ENCODE measurements at regions of chr9 and their contacts with region 1.

Region 1: GRCh38 chr9:137150617-137151457 is 11.9 kb downstream of the GRIN1 start:
- DNase-seq: peak; percentile 95
- H3K4me3 ChIP-seq: peak overlapping the region; percentile 40
- H3K27ac ChIP-seq: peak overlapping the region; percentile 42
- H3K4me1 ChIP-seq: peaks cover 17% of the 10 kb centered on the region
- CTCF ChIP-seq: no peak

Region 2: DNA sequence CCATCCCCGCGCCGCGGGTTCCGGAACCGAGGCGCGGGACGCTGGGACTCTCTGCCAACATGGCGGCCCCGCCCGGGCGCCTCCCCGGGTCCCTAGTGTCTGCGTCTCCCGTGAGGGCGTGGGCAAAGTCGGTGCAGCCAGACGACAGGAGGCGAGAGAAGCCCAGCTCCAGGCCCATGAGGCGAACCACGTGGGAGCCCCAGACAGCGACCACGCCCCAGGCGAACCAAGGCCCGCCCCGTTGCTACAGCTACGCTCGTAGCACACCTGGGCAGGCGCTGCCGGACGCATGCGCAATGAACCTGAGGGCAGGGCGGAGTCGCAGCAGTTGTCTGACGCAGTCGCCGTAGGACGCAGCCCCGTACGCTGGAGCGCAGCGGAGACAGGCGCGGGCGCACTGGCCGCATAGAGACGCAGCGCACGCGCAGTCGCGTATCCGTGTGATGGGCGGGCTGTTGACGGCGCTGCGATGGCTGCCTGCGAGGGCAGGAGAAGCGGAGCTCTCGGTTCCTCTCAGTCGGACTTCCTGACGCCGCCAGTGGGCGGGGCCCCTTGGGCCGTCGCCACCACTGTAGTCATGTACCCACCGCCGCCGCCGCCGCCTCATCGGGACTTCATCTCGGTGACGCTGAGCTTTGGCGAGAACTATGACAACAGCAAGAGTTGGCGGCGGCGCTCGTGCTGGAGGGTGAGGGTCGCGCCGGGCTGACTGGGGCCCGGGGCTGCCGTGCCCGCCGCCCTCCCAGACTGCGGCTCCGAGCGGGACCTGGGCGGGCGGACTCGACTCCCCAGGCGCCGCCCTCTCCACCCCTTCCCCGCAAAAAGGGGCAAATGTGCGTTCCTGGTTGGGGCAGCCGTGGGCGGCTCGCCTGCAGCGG is 64.1 kb before region 1 on chr9 and contains the start of gene MAN1B1:
- CTCF ChIA-PET with region 1: no interaction called
- POLR2A ChIA-PET with region 1: no interaction called
- intact Hi-C with region 1: loop called (anchors 2 kb)
- DNase-seq: peak; percentile 99
- H3K4me3 ChIP-seq: peak within 1 kb of the TSS; percentile 77
- H3K27ac ChIP-seq: peak within 1 kb of the TSS; percentile 53
- H3K4me1 ChIP-seq: peaks cover 24% of the 10 kb centered on the region
- CTCF ChIP-seq: no peak
- total RNA-seq, gene MAN1B1: 22.5 and 32.7 TPM in 2 replicates

Region 3: DNA sequence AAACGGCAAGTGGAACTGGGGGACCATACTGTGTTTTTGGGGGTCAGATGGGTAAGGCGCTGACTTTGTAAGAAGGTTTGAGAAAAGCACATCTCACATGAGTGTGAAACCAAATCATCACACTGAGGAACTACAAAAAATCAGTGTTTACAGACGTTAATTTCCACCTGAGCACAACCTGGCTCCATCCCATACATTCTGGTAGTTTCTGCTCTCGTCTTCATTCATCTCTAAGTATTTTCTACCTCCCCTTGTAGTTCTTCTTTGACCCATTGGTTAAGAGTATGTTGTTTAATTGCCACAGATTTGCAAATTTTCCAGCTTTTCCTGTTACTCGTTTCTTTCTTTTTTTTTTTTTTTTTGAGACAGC is 27.4 kb before region 1 on chr9:
- CTCF ChIA-PET with region 1: no interaction called
- POLR2A ChIA-PET with region 1: interaction called, 52 read pairs
- intact Hi-C with region 1: loop called (anchors 5 kb)
- DNase-seq: peak; percentile 39
- H3K4me3 ChIP-seq: peak overlapping the region; percentile 45
- H3K27ac ChIP-seq: peak overlapping the region; percentile 93
- H3K4me1 ChIP-seq: peaks cover 67% of the 10 kb centered on the region
- CTCF ChIP-seq: no peak

Region 4: GRCh38 chr9:137188490-137189296 is 37.9 kb after region 1 on chr9 and contains the starts of genes ANAPC2 and SSNA1:
- CTCF ChIA-PET with region 1: no interaction called
- POLR2A ChIA-PET with region 1: interaction called, 4 read pairs
- intact Hi-C with region 1: loop called (anchors 2 kb)
- DNase-seq: peak; percentile 98
- H3K4me3 ChIP-seq: peak within 1 kb of the TSS; percentile 94
- H3K27ac ChIP-seq: peak within 1 kb of the TSS; percentile 92
- H3K4me1 ChIP-seq: peaks cover 27% of the 10 kb centered on the region
- CTCF ChIP-seq: peak; percentile 69
- total RNA-seq, gene ANAPC2: 34.8 and 38.6 TPM in 2 replicates
- total RNA-seq, gene SSNA1: 111 and 130 TPM in 2 replicates